Endothelial cell of umbilical vein (primary cell): ENCODE measurements at regions of chr4 and their contacts with region 1.

Region 1: GRCh38 chr4:89752932-89753581 is 83.9 kb downstream of the SNCA start:
- DNase-seq: peak; percentile 91
- H3K4me3 ChIP-seq: peak overlapping the region in 1 of 3 experiments; percentile 54
- H3K27ac ChIP-seq: peak overlapping the region; percentile 99
- H3K4me1 ChIP-seq: peaks cover 27% of the 10 kb centered on the region
- H3K27me3 ChIP-seq: no peaks in the 10 kb centered on the region
- CTCF ChIP-seq: no peak
- POLR2A ChIP-seq: no peak

Region 2: GRCh38 chr4:89657931-89658700 is 94.9 kb before region 1 on chr4:
- CTCF ChIA-PET with region 1: interaction called, 5 read pairs
- POLR2A ChIA-PET with region 1: no interaction called
- dilution Hi-C with region 1: no loop called
- intact Hi-C with region 1: loop called (anchors 5 kb)
- DNase-seq: peak; percentile 82
- H3K4me3 ChIP-seq: no peak overlapping the region
- H3K27ac ChIP-seq: no peak overlapping the region
- H3K4me1 ChIP-seq: peaks cover 9% of the 10 kb centered on the region
- H3K27me3 ChIP-seq: no peaks in the 10 kb centered on the region
- CTCF ChIP-seq: peak; percentile 29 to 34
- POLR2A ChIP-seq: no peak

Region 3: DNA sequence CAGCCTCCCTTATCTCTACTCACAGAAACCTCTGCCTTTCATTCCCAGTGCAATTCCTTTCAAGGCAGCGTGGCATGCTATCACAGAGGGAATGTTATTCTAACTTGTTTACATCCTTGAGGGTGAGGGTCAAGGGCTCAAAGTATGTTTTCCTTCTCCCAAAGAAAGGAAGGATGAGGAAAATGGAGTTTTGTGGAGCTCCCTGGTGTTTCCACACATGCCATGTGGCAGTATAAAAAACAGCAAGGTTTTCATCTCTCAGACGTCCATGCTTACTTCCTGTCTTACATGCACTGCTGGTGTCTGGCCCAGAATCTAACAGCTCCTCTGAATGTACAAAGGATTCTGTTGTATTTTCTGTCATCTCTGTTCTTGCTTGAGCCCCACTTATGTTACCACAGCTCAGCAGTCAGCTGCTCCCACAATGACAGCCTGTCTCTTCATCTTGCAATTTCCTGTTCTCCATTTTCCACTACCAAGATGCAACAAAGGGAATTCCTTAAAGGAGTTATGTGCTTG is 44.1 kb before region 1 on chr4:
- CTCF ChIA-PET with region 1: interaction called, 8 read pairs
- POLR2A ChIA-PET with region 1: no interaction called
- dilution Hi-C with region 1: no loop called
- intact Hi-C with region 1: loop called (anchors 2 kb)
- DNase-seq: peak; percentile 99
- H3K4me3 ChIP-seq: no peak overlapping the region
- H3K27ac ChIP-seq: peak overlapping the region; percentile 81
- H3K4me1 ChIP-seq: peaks cover 16% of the 10 kb centered on the region
- H3K27me3 ChIP-seq: no peaks in the 10 kb centered on the region
- CTCF ChIP-seq: no peak
- POLR2A ChIP-seq: peak; percentile 37

Region 4: GRCh38 chr4:89724716-89725115 is 28.3 kb before region 1 on chr4:
- CTCF ChIA-PET with region 1: interaction called, 4 read pairs
- POLR2A ChIA-PET with region 1: no interaction called
- dilution Hi-C with region 1: no loop called
- intact Hi-C with region 1: loop called (anchors 2 kb)
- DNase-seq: peak; percentile 66
- H3K4me3 ChIP-seq: no peak overlapping the region
- H3K27ac ChIP-seq: peak overlapping the region; percentile 73
- H3K4me1 ChIP-seq: peaks cover 28% of the 10 kb centered on the region
- H3K27me3 ChIP-seq: no peaks in the 10 kb centered on the region
- CTCF ChIP-seq: no peak
- POLR2A ChIP-seq: no peak

Region 5: DNA sequence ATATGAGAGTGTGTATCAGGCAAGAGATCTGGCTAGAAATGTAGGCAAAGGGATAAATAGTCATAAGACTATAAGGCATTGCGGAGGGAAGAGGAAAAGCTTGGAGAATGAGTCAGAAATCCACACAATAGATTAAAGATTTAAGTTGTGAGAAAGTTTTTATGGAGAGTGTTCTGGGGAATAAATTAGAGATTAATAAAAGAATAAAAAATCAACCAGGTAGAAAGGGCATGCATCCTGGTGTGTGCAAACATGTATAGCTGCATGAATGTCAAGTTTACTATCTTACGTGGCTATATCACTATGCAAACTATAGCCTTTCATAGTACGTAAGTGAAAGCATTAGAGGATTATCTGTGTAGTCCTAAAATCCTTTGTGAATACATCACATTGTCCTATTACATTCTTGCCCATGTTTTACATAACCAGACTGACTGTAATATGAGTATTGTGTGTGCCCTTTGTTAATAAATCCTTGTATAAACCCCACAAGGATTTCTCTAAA is 47.0 kb after region 1 on chr4:
- CTCF ChIA-PET with region 1: interaction called, 5 read pairs
- POLR2A ChIA-PET with region 1: no interaction called
- dilution Hi-C with region 1: no loop called
- intact Hi-C with region 1: loop called (anchors 1 kb)
- DNase-seq: peak; percentile 91
- H3K4me3 ChIP-seq: peak overlapping the region in 1 of 3 experiments; percentile 45
- H3K27ac ChIP-seq: peak overlapping the region; percentile 90
- H3K4me1 ChIP-seq: peaks cover 53% of the 10 kb centered on the region
- H3K27me3 ChIP-seq: no peaks in the 10 kb centered on the region
- CTCF ChIP-seq: no peak
- POLR2A ChIP-seq: peak; percentile 77

Region 6: GRCh38 chr4:89836897-89837384 is 83.9 kb after region 1 on chr4 and contains the start of gene SNCA:
- CTCF ChIA-PET with region 1: no interaction called
- POLR2A ChIA-PET with region 1: no interaction called
- dilution Hi-C with region 1: no loop called
- intact Hi-C with region 1: loop called (anchors 1 kb)
- DNase-seq: peak; percentile 89
- H3K4me3 ChIP-seq: peak within 1 kb of the TSS; percentile 56 to 93 (median 91)
- H3K27ac ChIP-seq: peak within 1 kb of the TSS; percentile 62
- H3K4me1 ChIP-seq: peaks cover 21% of the 10 kb centered on the region
- H3K27me3 ChIP-seq: no peaks in the 10 kb centered on the region
- CTCF ChIP-seq: no peak
- POLR2A ChIP-seq: peak; percentile 78
- total RNA-seq, gene SNCA: 116 and 124 TPM in 2 replicates